ENCODE measurements at regions of chr9 and their contacts with region 1.

Region 1: DNA sequence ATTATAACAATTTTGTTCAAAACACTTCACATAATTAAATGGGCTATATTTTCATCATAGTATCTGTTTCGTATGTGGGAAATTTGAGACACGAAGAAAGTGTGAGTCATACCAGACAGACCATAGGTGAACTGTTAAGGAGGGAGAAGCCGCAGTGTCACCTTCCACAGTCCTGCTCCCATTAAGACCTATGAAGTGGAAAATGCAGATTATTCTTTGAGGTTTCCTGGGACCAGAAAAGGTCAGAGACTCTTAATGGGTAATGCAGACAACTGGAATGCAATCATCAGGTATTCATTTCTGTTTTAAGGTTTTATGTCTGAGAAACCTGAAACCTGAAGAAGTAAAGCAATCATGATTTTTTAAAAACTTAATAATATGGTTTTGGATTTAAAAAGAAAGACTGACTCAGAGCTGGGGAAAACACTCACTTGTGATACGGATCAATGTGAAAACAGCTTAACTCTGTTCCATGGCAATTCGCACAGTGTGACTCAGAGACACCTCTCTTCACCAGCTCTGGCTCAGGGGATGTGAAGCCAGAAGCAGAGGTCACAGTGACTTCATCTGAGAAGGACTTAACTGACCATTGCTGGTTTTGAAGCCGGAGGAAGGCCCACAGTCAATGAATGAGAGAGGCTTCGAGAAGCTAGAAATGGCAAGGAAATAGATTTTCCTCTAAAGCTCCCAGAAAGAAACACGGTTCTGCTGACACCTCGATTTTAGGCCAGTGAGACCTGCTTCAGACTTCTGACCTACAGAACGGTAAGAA is 17.2 kb upstream of the GCNT1 start:
- DNase-seq: peak in 1 of 9 donors; percentile 51
- ATAC-seq: no peak
- H3K4me3 ChIP-seq: no peak overlapping the region
- H3K4me3 Mint-ChIP-seq: peak overlapping the region in 1 of 10 donors; percentile 41
- H3K27ac ChIP-seq: no peak overlapping the region
- H3K27ac Mint-ChIP-seq: peak overlapping the region in 1 of 9 donors; percentile 79
- H3K4me1 ChIP-seq: no peaks in the 10 kb centered on the region
- H3K4me1 Mint-ChIP-seq: peaks cover 0 to 37% (median 0%) of the 10 kb centered on the region in 7 donors
- H3K27me3 ChIP-seq: no peaks in the 10 kb centered on the region
- H3K27me3 Mint-ChIP-seq: peaks cover 0 to 4% (median 0%) of the 10 kb centered on the region in 5 donors

Region 2: DNA sequence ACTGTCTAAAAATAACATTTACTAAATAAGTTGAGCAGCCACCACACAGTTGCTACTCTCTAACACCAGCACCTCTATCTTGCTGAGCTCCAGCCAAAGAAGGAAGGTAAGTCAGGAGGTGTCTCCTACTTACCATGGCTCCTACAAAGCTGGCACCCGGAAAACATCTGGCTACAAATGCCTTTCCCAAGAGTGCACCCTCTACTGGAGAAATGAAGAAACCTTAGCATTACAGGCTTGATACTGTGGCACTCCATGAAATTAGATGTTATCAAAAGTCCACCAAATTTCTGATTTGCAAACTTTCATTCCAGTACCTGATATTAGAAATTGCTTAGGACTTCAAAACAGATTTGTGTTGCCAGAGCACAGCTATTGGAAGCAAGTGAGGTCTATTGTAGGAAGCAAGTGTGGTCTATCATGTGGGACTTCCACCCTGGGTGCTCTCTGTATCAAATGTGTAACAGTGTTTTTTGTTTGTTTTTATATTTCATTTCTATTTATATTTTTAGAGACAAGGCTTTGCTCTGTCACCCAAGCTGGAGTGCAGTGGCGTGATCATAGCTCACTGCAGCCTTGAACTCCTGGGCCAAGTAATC is 21.9 kb before region 1 on chr9:
- CTCF ChIA-PET with region 1: interaction called, 3 read pairs
- POLR2A ChIA-PET with region 1: no interaction called
- intact Hi-C with region 1: loop called in 1 of 2 experiments (anchors 2 kb)
- DNase-seq: peak in 1 of 9 donors; percentile 5
- ATAC-seq: no peak
- H3K4me3 ChIP-seq: no peak overlapping the region
- H3K4me3 Mint-ChIP-seq: no peak overlapping the region
- H3K27ac ChIP-seq: no peak overlapping the region
- H3K27ac Mint-ChIP-seq: no peak overlapping the region
- H3K4me1 ChIP-seq: no peaks in the 10 kb centered on the region
- H3K4me1 Mint-ChIP-seq: peaks cover 3 to 40% (median 4%) of the 10 kb centered on the region in 7 donors
- H3K27me3 ChIP-seq: no peaks in the 10 kb centered on the region
- H3K27me3 Mint-ChIP-seq: no peaks in the 10 kb centered on the region

Region 3: DNA sequence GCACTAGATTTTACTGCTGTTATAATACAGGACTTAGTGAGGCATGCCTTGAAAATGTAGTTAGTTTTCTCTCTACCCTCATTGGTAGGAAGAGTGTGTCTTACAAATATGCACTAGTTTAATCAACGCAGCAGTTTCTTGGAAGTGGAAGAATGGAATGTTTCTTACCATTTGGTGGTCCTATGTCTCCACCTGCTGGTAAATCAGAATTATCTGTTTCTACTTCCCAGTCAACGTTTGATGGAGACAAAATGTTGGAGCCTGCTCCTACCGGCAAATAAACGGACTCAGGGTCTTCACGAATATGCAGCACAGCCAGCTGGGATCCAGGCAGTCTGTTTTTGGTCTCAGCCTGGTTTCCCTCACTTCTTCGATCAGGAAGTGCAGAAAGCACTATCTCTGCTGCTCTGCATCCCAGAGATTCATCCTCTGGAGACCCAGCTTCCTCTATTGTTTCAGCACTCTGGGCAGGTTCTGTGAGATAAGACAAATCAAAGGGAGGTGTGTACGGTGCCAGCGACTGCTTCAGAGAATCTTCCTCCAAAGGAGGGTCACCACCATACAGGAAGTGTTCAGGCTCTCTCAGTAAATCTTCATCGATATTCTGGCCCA is 263.0 kb after region 1 on chr9:
- CTCF ChIA-PET with region 1: interaction called, 23 read pairs
- POLR2A ChIA-PET with region 1: no interaction called
- intact Hi-C with region 1: no loop called
- DNase-seq: peak in 7 of 9 donors; percentile 12 to 55 (median 35)
- ATAC-seq: peak; percentile 63
- H3K4me3 ChIP-seq: no peak overlapping the region
- H3K4me3 Mint-ChIP-seq: no peak overlapping the region
- H3K27ac ChIP-seq: no peak overlapping the region
- H3K27ac Mint-ChIP-seq: no peak overlapping the region
- H3K4me1 ChIP-seq: no peaks in the 10 kb centered on the region
- H3K4me1 Mint-ChIP-seq: peaks cover 0 to 16% (median 1%) of the 10 kb centered on the region in 7 donors
- H3K27me3 ChIP-seq: no peaks in the 10 kb centered on the region
- H3K27me3 Mint-ChIP-seq: peaks cover 35 to 51% (median 40%) of the 10 kb centered on the region in 5 donors

Region 4: GRCh38 chr9:77011973-77012821 is 570.5 kb after region 1 on chr9:
- CTCF ChIA-PET with region 1: no interaction called
- POLR2A ChIA-PET with region 1: no interaction called
- intact Hi-C with region 1: loop called in 1 of 2 experiments (anchors 5 kb)
- DNase-seq: peak; percentile 13 to 66 (median 38)
- ATAC-seq: peak; percentile 77
- H3K4me3 ChIP-seq: no peak overlapping the region
- H3K4me3 Mint-ChIP-seq: peak overlapping the region in 9 of 10 donors; percentile 12 to 61 (median 28)
- H3K27ac ChIP-seq: no peak overlapping the region
- H3K27ac Mint-ChIP-seq: peak overlapping the region in 1 of 9 donors; percentile 24
- H3K4me1 ChIP-seq: no peaks in the 10 kb centered on the region
- H3K4me1 Mint-ChIP-seq: peaks cover 4 to 24% (median 8%) of the 10 kb centered on the region in 7 donors
- H3K27me3 ChIP-seq: peaks cover 0 to 7% of the 10 kb centered on the region in 2 donors
- H3K27me3 Mint-ChIP-seq: peaks cover 63 to 78% (median 70%) of the 10 kb centered on the region in 5 donors

Measured in naive thymus-derived CD4-positive, alpha-beta T cell (primary cell).